Calu3 (cell line): ENCODE measurements at regions of chr5 and their contacts with region 1.

Region 1: DNA sequence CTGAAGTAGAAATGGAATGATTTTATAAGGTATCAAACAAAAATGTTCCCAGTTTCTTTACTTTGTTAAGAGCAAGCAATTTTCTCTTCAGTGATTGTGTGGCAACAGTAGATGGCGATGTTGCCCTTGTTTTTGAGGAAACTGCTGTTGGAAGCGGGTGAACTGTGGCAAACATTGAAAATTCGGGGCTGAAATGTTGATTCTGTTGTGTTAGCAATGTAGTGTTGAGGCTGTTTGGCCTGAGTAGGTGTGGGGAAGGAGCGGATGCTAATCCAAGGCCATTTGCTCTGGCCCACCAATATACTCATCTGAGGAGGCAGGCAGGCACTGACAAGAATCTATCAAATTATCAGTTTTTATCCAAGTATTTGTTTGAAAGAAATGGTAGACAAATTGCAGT is 129.8 kb downstream of the SLC12A2 start:
- DNase-seq: peak; percentile 75
- H3K4me3 Mint-ChIP-seq: no peak overlapping the region
- H3K27ac Mint-ChIP-seq: peak overlapping the region; percentile 57
- H3K4me1 Mint-ChIP-seq: peaks cover 9% of the 10 kb centered on the region
- H3K27me3 Mint-ChIP-seq: no peaks in the 10 kb centered on the region
- CTCF ChIP-seq: peak; percentile 78

Region 2: DNA sequence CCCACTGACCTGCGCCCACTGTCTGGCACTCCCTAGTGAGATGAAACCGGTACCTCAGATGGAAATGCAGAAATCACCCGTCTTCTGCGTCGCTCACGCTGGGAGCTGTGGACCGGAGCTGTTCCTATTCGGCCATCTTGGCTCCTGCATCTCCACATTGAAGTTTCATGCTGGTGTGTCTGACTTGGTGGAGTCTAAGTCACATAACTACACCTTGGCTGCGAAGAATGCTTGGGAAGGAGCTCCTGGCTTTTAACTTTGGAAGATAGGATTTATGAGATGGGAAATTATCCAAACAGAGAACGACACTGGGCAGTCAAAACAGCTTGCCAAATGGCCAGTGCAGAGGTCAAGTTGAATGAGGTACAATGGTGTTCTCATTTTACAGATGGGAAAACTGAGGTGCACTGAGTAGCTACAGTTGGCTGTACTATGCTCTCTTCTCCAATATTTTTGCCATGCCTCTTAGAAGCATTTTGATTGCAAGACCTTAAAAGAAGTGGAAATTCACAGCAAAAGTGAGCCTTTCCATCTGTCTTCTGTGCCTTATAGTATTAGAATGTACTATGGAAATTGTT is 473.4 kb before region 1 on chr5:
- CTCF ChIA-PET with region 1: no interaction called
- intact Hi-C with region 1: loop called (anchors 5 kb)
- DNase-seq: no peak
- H3K4me3 Mint-ChIP-seq: peak overlapping the region; percentile 63
- H3K27ac Mint-ChIP-seq: peak overlapping the region; percentile 31
- H3K4me1 Mint-ChIP-seq: peaks cover 9% of the 10 kb centered on the region
- H3K27me3 Mint-ChIP-seq: peaks cover 7% of the 10 kb centered on the region
- CTCF ChIP-seq: no peak

Region 3: DNA sequence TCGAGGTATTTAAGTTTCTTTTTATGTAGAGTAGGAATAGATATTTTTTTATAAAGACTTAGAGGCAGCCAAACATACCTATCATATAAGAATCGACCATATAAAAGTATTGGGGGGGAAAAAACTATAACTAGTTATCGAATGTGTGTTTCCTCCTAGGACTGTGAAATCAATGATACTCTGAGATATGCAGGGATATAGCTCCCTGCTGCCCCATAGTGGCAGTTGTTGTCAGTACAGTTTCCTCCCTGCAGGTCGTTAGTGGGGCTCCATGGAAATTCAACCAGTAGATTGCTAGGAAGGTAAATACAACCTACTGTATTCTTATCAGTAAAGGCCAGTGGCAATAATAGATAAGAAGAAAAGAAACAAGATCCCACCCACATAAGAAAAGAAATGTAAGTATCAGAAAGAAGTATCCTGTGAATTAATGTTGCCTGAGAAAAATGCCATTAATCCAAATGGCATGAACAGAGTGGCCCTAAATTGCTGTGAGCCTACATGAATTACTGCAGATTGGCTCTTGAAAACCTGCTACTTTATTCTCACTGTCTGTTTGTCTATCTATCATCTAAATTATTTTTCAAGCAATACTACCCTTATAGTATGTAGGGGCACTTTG is 461.6 kb after region 1 on chr5:
- CTCF ChIA-PET with region 1: no interaction called
- intact Hi-C with region 1: loop called (anchors 2 kb)
- DNase-seq: peak; percentile 76
- H3K4me3 Mint-ChIP-seq: no peak overlapping the region
- H3K27ac Mint-ChIP-seq: no peak overlapping the region
- H3K4me1 Mint-ChIP-seq: peaks cover 15% of the 10 kb centered on the region
- H3K27me3 Mint-ChIP-seq: no peaks in the 10 kb centered on the region
- CTCF ChIP-seq: peak; percentile 55

Region 4: DNA sequence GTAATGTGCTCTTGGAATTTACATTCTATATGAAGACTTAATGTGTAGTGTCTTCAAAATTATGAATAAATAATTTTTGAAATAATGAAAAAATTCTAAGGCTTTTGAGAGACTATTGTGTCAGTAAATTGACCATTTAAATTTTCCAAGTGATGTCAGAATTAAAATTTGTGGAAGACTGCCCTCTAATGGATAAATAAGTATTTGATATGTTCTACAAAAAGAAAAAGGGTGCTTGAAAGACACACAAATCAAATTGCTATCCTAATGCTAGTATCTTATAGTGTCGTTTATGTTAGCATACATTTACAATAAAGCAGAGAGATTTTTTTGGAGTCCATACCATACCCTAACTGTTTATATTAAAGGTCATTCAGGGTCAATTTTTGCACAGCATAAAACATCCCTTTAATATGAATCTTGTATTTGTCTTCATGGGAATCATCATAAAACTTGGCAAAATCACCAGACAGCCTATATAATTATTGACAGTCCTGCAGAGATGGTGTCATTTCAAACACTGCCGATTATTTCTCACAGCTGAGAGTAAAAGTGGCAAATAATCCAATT is 631.1 kb after region 1 on chr5:
- CTCF ChIA-PET with region 1: no interaction called
- intact Hi-C with region 1: loop called (anchors 1 kb)
- DNase-seq: no peak
- H3K4me3 Mint-ChIP-seq: no peak overlapping the region
- H3K27ac Mint-ChIP-seq: no peak overlapping the region
- H3K4me1 Mint-ChIP-seq: no peaks in the 10 kb centered on the region
- H3K27me3 Mint-ChIP-seq: no peaks in the 10 kb centered on the region
- CTCF ChIP-seq: no peak